ENCODE measurements at regions of chr5 and their contacts with region 1.

Region 1: DNA sequence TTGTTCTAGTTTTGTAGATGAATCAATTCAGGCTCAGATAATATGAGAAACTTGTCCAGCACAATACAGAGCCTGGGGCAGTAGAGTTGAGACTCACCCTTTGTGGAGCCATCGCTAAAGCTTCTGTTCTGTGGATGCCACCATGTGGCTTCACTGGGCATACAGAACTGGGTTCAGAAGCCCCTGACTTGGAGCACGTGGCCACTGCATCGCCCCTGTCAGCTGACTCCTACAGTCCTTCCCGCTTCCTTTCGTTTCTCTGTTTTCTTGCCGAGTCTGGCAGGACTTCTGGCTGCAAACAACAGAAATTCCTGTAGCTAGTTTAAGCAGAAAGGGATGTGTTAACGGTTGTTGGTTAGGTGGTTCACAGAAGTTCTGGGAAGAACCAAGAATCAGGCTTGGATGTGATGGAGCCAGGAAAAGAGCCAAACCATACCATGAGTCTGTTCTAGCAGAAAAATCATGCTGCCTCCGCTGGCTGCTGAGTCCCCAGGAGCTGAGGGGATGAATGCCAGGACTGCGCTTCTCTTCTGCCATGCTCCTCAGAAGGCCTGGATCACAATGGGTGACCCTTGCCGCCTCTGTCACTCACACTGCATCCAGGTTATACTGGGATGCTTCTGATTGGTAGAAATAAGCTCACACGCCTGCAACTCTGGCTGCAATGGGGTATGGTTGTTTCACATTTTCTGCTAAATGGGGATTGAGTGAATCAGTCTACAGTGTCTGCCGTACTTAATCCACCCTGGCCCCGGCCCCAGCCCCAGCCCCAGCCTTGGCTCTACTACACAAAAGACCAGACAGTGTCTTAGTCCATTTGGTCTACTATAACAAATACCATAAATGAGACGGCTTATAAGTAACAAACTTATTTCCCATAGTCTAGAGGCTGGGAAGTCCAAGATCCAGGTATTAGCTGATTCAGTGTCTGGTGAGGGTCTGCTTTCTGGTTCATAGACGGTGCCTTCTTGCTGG is 262.5 kb downstream of the GOLPH3 start:
- DNase-seq: peak in 9 of 10 donors; percentile 40 to 95 (median 73)

Region 2: DNA sequence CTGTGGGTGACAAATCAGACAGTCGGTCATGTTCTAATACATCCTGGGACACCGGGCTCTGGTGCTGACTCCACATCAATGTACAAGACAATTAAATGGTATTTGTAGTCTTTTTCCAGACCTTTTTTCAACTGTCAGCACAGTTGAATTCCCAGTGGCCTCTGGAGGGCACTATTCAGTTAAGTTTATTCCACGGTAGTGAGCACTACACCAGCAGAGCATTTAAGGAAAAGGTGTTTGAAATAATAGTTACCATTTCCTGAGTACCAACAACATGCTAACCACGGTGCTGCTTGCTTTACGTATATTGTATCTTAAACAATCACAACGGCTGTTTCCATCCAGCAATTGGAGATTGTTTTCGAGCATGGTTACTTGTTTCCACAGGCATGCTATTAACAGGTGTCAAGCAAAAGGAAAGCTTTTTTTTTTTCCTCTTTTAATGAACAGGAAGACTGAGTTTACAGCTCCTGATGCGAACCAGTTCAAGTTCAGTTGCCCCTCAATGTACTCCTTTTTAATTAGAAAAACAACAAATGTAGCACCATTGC is 86.0 kb before region 1 on chr5:
- intact Hi-C with region 1: loop called (anchors 5 kb)
- DNase-seq: peak in 5 of 10 donors; percentile 15 to 58 (median 41)

Region 3: DNA sequence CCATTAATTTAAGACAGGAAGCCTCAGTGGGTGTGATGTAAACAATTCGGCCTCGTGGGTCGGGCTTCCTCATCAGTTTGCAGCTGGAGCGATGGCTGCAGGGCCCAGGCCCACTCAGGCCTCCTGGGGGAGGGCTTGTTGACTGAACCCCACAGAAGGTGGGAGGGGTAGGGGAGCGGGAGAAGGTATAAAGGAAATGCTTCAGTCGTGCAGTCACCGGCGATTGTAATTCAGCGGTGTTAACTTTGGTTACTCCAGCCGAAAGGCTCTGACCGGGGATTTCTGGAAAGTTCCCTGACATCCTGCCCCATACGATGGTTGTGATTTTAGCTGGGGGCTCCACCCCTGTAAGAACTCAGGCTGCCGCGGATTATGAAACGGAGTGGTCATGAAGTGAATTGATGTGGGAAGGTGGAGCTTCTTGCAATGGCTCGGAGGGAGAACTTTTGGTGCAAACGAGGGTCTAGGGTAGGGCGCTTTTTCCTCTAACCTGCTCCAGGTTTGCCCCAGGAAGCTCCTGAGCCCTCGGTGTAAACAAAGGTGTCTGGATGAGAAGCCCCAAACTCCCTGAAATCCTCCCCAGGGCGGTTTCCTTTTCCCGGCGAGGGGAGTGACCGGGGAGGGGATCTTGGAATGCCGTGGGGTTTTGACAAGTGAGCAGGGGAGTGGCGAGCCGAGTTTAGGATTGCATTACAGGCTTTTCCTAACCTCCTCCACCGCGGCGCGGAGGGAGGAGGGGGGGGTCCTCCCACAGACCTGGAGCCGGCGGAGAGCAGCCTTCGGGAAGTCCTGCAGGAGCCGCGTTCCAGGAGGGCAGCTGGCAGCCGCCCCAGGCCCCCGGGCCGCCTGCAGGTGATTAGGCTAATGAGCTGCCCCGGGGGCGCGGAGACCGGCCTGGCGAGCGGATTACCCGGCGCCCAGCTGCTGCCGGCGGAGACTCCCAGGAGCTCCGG is 57.1 kb before region 1 on chr5:
- intact Hi-C with region 1: loop called (anchors 1 kb)
- DNase-seq: peak in 6 of 10 donors; percentile 14 to 87 (median 30)